Tibial artery (tissue), 4 donors: ENCODE measurements at regions of chrX and their contacts with region 1.

Region 1: GRCh38 chrX:45322382-45322781 is 121.7 kb upstream of the DIPK2B start:
- DNase-seq: peak; percentile 20 to 42
- H3K4me3 ChIP-seq: no peak overlapping the region
- H3K27ac ChIP-seq: no peak overlapping the region
- H3K4me1 ChIP-seq: no peaks in the 10 kb centered on the region
- H3K27me3 ChIP-seq: no peaks in the 10 kb centered on the region
- CTCF ChIP-seq: peak; percentile 43 to 45

Region 2: DNA sequence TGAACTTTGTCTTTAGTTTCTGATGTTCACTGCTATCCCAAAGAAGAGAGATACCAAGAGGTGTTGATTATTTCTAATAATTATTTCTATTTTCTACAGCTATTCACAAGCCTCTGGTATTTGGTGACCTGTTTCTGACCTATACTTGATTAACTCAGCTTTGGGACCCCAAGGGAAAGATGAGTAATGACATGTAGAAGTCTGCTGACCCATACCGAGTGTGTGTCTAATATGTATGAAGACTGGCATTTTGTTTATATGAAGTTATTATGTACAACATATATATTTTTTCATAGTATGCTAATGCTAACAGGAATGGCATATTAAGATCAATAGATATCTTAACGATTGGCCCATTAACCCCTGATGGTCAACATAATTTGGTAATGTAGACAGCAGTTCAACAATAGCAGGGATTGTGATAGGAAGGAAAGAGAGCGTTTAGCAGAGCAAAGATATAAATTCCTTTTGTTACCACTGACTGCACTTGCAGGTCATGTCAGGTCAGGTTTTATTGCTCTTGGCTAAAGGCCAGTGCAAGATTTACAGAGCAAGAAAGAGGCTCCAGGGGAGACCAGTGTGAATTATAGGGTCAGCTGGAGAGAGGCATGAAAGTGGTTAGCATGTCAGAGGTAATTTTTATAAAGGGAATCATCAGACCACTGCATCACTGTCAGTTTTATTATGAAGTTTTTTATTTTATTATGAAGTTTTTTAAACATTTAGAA is 27.0 kb before region 1 on chrX:
- intact Hi-C with region 1: no loop called
- DNase-seq: no peak
- H3K4me3 ChIP-seq: no peak overlapping the region
- H3K27ac ChIP-seq: no peak overlapping the region
- H3K4me1 ChIP-seq: no peaks in the 10 kb centered on the region
- H3K27me3 ChIP-seq: no peaks in the 10 kb centered on the region
- CTCF ChIP-seq: no peak

Region 3: GRCh38 chrX:46408553-46409407 is 1086.4 kb after region 1 on chrX:
- intact Hi-C with region 1: loop called (anchors 10 kb)
- DNase-seq: peak; percentile 43 to 79
- H3K4me3 ChIP-seq: no peak overlapping the region
- H3K27ac ChIP-seq: no peak overlapping the region
- H3K4me1 ChIP-seq: no peaks in the 10 kb centered on the region
- H3K27me3 ChIP-seq: no peaks in the 10 kb centered on the region
- CTCF ChIP-seq: peak; percentile 62